Head of caudate nucleus (tissue), 42 donors: ENCODE measurements at regions of chr12 and their contacts with region 1.

Region 1: DNA sequence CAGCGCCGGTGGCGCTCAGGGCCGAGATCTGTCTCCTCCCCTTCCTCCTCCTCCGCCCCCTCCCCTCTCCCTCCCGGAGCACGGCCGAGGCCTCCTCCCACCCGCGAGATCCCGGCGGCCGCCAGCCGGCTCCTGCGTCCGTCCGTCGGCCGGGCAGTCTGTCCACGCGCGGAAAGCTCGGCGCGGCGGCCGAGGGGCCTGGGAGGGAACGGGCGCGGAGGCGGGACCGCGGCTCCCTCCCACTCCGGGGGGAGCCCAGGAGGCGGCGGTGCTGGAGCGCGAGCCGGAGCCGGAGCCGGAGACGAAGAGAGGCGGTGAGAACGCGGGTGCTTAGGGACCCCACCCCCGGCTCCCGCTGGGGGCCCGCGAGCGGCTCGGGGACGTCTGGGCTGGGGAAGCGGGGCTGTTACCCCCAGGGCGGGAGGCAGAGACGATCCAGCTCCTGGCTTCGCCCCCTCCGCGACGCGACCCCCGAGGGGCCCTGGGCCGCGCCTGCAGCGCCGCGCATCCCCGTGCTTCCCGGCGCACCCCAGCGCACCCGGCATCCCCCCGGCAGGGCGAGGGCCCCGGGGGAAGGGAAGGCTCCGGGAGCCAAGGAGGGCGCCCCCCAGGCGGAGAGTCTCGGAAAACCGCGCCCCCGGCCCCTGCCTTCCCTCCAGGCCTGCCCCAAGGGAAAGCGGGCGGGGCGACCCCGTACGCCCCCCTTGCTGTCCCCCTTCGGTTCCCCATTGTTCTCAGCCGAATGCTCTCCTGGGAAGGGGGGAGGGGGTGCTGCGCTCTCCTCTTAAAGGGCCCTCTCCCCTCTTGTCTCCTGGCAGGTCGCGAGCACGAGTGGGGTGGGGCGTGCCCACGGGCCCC is at the start of gene DTX1:
- DNase-seq: peak in 37 of 42 donors; percentile 16 to 85 (median 51)

Region 2: GRCh38 chr12:113098446-113098896 is 41.6 kb after region 1 on chr12:
- intact Hi-C with region 1: loop called (anchors 2 kb)
- DNase-seq: peak; percentile 74 to 93 (median 84)

Region 3: DNA sequence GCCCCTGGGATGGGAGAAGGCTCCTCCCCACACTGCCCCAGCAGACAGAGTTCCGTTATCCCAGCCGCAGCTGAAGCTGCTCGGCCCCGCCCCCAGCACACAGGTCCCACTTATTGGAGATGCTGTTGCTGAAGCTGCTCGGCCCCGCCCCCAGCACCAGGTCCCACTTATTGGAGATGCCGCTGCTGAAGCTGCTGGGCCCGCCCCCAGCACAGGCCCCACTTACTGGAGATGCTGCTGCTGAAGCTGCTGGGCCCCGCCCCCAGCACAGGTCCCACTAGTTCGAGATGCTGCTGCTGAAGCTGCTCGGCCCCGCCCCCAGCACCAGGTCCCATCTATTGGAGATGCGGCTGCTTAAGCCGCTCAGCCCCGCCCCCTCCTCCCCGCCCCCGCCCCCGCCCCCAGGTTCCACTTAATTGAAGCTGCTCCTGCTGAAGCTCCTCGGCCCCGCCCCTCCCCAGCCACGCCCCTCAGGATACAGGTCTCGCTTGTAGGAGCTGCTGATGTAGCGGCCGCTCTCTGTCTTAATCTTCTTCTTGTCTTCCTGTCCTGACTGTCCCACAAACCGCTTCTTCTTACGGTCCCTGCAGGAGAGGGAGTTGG is 104.7 kb after region 1 on chr12:
- intact Hi-C with region 1: no loop called
- DNase-seq: peak; percentile 60 to 97 (median 86)

Region 4: GRCh38 chr12:113203852-113204760 is 147.2 kb after region 1 on chr12:
- intact Hi-C with region 1: no loop called
- DNase-seq: peak in 1 of 42 donors; percentile 19